ENCODE measurements at regions of chr12 and their contacts with region 1.

Region 1: DNA sequence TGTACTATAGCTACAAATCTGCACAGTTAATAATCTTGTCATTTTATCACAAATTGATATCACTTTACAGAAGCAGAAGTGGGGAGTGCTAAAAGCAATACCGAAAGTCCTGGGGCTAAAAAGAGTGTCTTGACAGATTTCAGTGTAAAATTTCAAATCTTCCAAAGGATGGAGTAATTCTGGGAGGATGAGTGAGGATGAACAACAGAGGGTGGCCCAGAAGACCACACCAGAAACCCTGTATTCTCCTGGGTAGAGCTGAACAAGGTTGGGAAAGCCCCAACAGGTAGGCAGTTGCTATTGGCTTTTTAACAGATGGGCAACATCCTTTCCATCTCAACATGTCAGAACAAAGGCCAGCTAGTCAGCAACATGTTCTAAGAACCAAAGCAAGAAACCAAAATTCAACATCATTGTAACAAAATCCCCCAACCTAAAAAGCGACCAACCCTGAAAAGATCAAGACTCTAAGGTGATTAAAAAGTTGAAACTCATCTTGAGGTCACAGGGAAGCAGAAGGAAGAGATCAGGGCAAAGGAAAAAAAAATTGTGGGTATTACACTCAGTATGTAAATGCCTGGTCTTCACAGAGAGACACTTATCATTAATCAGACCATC is 38.8 kb downstream of the CBX5 start:
- DNase-seq: no peak
- H3K4me3 ChIP-seq: no peak overlapping the region
- H3K27ac ChIP-seq: no peak overlapping the region
- H3K4me1 ChIP-seq: no peaks in the 10 kb centered on the region
- H3K27me3 ChIP-seq: no peaks in the 10 kb centered on the region
- CTCF ChIP-seq: no peak

Region 2: GRCh38 chr12:54159140-54159539 is 81.9 kb before region 1 on chr12:
- CTCF ChIA-PET with region 1: no interaction called
- POLR2A ChIA-PET with region 1: no interaction called
- intact Hi-C with region 1: no loop called
- DNase-seq: no peak
- H3K4me3 ChIP-seq: no peak overlapping the region
- H3K27ac ChIP-seq: no peak overlapping the region
- H3K4me1 ChIP-seq: no peaks in the 10 kb centered on the region
- H3K27me3 ChIP-seq: peaks cover 7% of the 10 kb centered on the region; the same call in 1 of the 2 replicates
- CTCF ChIP-seq: no peak; the same call in 1 of the 2 replicates

Region 3: DNA sequence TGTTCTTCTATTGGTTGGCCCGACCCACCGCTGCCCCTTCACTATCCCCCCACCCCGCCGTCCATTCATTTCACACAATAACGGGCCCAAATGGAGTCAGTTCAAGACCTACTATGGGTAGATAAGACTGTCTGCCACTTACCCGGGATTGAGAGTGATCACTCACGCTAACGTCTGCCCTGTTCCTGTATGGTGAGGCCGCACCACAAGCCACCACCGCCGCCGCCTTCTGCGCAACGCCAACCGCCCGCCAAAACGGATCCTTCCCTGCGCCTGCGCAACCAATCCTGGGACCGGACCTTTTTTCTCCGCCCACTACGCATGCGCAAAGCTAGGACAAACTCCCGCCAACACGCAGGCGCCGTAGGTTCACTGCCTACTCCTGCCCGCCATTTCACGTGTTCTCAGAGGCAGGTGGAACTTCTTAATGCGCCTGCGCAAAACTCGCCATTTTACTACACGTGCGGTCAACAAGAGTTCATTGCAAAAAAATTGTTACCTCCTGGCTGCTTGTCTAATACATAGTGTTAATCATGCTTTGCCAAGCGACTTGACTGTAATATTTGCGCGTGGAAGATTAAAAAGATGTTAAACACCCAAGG is 38.9 kb after region 1 on chr12 and contains the start of gene CBX5:
- CTCF ChIA-PET with region 1: no interaction called
- POLR2A ChIA-PET with region 1: interaction called, 5 read pairs
- intact Hi-C with region 1: loop called (anchors 5 kb)
- DNase-seq: peak; percentile 96 to 98
- H3K4me3 ChIP-seq: peak within 1 kb of the TSS; percentile 82
- H3K27ac ChIP-seq: peak within 1 kb of the TSS; percentile 94
- H3K4me1 ChIP-seq: peaks cover 38% of the 10 kb centered on the region
- H3K27me3 ChIP-seq: no peaks in the 10 kb centered on the region
- CTCF ChIP-seq: no peak
- total RNA-seq, gene CBX5: 108 and 154 TPM in 2 replicates

Measured in PC-9 (cell line).